Naive thymus-derived CD8-positive, alpha-beta T cell (primary cell): ENCODE measurements at regions of chr19 and their contacts with region 1.

Region 1: GRCh38 chr19:531009-531752 is 379 bp upstream of the CDC34 start:
- DNase-seq: peak; percentile 83 to 97 (median 92)
- ATAC-seq: peak; percentile 75 to 80
- H3K4me3 Mint-ChIP-seq: peak overlapping the region; percentile 75 to 91 (median 81)
- H3K27ac Mint-ChIP-seq: peak overlapping the region in 9 of 10 donors; percentile 32 to 93 (median 90)
- H3K4me1 Mint-ChIP-seq: peaks cover 10 to 25% (median 15%) of the 10 kb centered on the region in 4 donors
- H3K27me3 Mint-ChIP-seq: peaks cover 0 to 3% (median 0%) of the 10 kb centered on the region in 5 donors

Region 2: DNA sequence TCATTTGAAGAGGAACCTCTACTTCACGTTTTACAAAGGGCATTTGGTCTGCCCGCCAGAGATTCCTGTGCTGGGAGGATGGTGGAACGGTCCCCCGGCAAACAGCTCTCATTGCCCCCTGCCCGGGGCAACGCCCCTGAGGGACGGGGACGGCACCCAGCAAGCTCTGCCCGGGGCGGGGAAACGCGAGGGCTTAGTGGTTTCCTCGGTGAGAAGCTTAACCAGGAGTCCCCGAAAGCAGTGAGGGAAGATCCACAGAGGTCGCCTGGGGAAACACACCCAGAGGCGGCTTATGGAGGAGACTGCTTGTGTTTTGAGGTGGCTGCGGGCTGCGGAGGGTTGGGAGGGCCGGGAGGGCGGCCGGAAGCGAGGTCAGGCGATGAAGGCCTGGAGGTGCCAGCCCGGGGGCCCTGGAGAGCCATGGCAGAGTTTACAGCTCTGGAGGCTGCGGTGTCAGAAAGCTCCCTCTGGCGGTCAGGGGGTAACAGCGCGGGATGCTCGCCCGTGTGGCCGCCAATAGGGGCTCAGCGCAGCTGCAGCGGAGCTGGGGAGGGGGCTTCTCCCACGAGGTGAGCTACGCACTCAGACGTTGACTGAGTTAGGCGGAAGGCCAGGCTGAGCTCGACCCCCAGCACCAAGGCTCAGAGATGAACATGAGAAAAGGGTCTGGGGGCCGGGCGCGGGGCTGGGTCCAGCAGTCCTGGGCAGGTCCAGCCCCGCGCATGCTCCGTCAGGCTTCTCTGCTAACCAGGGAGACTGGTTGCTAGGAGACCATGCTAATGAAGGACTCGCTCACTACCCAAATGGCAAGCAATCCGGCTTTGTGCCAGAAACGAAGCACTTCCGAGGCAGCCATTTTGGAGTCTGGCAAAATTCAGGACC is 24.5 kb before region 1 on chr19:
- POLR2A ChIA-PET with region 1: interaction called, 55 read pairs
- DNase-seq: peak; percentile 87 to 99 (median 94)
- ATAC-seq: peak; percentile 53 to 56
- H3K4me3 Mint-ChIP-seq: peak overlapping the region; percentile 88 to 100 (median 98)
- H3K27ac Mint-ChIP-seq: peak overlapping the region; percentile 95 to 100 (median 99)
- H3K4me1 Mint-ChIP-seq: peaks cover 18 to 52% (median 38%) of the 10 kb centered on the region in 4 donors
- H3K27me3 Mint-ChIP-seq: no peaks in the 10 kb centered on the region

Region 3: DNA sequence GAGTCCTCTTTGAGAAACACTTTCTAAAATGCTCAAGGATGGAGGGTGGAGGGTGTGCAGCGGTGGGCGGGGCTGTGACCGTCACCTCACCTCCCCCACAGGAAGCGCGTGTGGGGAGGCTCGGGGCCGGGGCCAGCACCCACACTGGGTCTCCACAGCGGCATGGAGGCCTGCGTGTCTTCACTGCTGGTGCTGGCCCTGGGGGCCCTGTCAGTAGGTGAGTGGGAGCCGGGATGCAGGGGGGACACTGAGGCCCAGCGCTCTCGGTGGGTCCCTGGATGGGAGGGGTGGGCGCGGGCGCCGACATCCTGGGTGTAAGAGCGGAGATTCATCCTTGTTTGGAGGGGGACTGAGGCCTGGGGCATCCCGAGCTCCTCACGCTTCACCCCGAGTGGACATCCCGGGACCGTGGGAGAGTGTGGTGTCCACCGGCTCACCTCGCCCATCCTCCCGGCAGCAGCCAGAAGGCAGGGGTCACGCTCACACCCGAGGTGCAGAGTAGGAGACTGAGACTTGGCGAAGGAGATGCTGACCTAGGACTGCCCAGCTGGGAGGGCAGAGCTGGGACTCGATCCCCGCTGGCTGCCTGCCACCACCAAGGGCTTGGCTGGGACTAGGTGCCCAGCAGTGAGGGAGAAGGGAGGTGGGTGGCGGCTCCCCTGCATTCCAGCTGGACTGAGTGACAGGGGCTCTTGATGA is 12.9 kb after region 1 on chr19 and contains the start of gene GZMM:
- POLR2A ChIA-PET with region 1: interaction called, 17 read pairs
- DNase-seq: peak; percentile 68 to 90 (median 82)
- ATAC-seq: peak; percentile 95 to 96
- H3K4me3 Mint-ChIP-seq: peak within 1 kb of the TSS; percentile 89 to 96 (median 91)
- H3K27ac Mint-ChIP-seq: peak within 1 kb of the TSS; percentile 57 to 97 (median 95)
- H3K4me1 Mint-ChIP-seq: peaks cover 4 to 36% (median 20%) of the 10 kb centered on the region in 4 donors
- H3K27me3 Mint-ChIP-seq: no peaks in the 10 kb centered on the region
- polyA plus RNA-seq, gene GZMM: 228 to 450 (median 333) TPM

Region 4: DNA sequence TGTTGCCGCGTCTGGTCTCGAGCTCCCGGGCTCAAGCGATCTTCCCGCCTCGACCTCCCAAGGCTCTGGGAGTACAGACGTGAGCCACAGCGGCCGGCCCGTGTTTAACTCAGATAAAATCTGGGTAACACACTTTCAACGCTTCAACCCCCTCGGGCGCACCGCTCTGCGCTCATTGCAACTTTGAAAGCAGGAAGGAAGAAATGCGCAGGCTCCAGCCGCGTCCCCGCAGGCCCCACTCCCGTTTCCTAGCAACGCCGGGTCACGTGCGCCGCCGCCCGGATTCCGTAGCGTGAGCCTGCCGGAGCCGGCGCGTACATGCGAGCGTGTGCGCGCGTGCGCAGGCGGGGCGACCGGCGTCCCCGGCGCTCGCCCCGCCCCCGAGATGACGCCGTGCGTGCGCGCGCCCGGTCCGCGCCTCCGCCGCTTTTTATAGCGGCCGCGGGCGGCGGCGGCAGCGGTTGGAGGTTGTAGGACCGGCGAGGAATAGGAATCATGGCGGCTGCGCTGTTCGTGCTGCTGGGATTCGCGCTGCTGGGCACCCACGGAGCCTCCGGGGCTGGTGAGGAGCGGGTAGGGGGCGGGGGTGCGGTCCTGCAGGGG is 41.1 kb after region 1 on chr19 and contains the start of gene BSG:
- POLR2A ChIA-PET with region 1: interaction called, 17 read pairs
- DNase-seq: peak; percentile 95 to 99 (median 98)
- ATAC-seq: peak; percentile 79 to 84
- H3K4me3 Mint-ChIP-seq: peak within 1 kb of the TSS; percentile 85 to 99 (median 97)
- H3K27ac Mint-ChIP-seq: peak within 1 kb of the TSS; percentile 92 to 100 (median 98)
- H3K4me1 Mint-ChIP-seq: peaks cover 14 to 52% (median 43%) of the 10 kb centered on the region in 4 donors
- H3K27me3 Mint-ChIP-seq: peaks cover 0 to 3% (median 0%) of the 10 kb centered on the region in 5 donors
- polyA plus RNA-seq, gene BSG: 282 to 313 (median 309) TPM

Region 5: DNA sequence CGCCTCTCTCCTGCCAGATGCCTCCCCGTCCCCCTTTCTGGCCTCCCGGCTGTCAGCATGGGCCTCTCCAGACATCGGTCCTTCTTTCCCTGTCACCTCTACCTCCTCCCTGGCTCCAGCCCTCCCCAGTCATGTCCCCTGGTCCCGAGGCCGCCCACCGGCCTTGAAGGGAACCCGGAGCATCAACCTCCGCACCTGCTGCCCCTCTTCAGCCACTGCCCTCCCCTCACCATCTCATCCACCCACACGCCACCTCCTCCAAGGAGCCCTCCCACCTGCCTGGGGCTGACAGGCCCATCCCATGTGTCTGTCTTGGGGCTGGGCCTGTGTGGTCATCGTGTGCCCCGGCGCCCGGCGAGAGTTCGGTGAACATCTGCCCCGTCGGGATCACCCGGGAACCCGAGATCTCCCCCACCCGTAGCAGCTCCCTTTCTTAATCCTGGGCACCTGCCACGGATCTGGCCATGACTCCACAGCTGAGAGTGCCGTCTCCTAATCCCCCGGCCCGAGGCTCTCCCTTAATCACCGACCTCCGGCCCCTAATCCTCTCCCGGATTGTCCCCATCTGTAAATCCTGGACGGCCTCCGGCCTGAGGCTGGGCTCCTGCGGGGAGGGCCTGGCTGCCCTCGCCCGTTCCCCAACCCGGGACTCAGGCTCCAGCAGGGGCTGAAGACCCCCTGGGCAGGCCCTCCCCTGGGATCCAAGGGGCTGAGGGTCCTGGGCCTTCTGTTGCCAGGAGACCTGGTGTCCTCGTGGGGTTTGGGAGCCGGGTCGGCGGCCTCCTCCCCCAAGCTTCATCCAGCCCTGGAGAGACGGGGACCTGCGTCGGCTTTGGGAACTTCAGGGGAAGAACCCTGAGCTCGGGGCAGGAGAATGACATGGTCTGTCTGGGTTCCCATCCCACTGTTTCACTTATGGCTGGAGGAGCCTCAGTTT is 64.4 kb after region 1 on chr19:
- POLR2A ChIA-PET with region 1: no interaction called
- DNase-seq: no peak
- ATAC-seq: no peak
- H3K4me3 Mint-ChIP-seq: no peak overlapping the region
- H3K27ac Mint-ChIP-seq: no peak overlapping the region
- H3K4me1 Mint-ChIP-seq: peaks cover 0 to 3% (median 1%) of the 10 kb centered on the region in 4 donors
- H3K27me3 Mint-ChIP-seq: peaks cover 0 to 14% (median 0%) of the 10 kb centered on the region in 5 donors

Region 6: GRCh38 chr19:610801-611505 is 79.8 kb after region 1 on chr19:
- POLR2A ChIA-PET with region 1: no interaction called
- DNase-seq: peak; percentile 41 to 81 (median 57)
- ATAC-seq: peak; percentile 70 to 71
- H3K4me3 Mint-ChIP-seq: peak overlapping the region; percentile 81 to 99 (median 95)
- H3K27ac Mint-ChIP-seq: peak overlapping the region; percentile 81 to 99 (median 94)
- H3K4me1 Mint-ChIP-seq: peaks cover 11 to 26% (median 19%) of the 10 kb centered on the region in 4 donors
- H3K27me3 Mint-ChIP-seq: peaks cover 0 to 4% (median 0%) of the 10 kb centered on the region in 5 donors